ENCODE measurements at regions of chr11 and their contacts with region 1.

Region 1: DNA sequence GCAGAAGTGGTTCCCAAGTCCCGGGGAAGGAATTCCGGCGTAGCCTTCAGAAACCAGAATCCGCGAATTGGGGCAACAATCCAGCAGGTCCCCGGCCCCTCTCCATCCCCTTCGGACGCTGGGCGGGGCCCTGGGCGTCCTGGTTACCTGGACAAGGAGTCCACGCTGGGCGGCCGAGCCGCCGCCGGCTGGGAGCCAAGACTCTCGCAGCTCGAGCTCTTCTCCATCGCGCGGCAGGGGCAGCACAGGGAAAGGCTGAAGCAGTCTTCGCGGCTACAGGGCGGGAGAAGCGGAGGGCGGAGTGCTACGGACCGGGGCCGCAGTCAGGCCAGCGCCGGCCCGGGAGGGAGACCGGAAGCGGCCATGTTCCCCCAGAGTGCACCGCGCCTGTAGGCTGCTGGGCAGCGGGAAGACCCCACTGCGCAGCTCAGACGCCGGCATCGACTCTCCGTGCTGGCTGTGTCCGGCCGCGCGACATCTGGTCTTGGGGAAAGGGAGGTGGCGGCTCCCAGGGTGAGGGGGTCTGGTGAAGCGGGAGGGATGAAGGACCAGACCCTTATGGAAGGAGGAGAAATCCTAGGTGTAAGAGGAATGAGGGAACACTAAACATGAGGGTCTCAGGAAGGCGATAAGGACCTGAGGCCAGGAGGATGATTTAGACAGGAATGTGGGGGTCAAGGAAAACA is at the start of gene MTMR2:
- DNase-seq: peak; percentile 10 to 77 (median 39)
- ATAC-seq: peak; percentile 66
- H3K4me3 ChIP-seq: peak within 1 kb of the TSS; percentile 87 to 94
- H3K4me3 Mint-ChIP-seq: peak within 1 kb of the TSS; percentile 89
- H3K27ac ChIP-seq: peak within 1 kb of the TSS; percentile 62 to 88
- H3K27ac Mint-ChIP-seq: peak within 1 kb of the TSS; percentile 81
- H3K4me1 ChIP-seq: peaks cover 3% of the 10 kb centered on the region
- H3K4me1 Mint-ChIP-seq: peaks cover 35% of the 10 kb centered on the region
- H3K27me3 ChIP-seq: no peaks in the 10 kb centered on the region
- H3K27me3 Mint-ChIP-seq: peaks cover 3% of the 10 kb centered on the region
- CTCF ChIP-seq: no peak
- total RNA-seq, gene MTMR2: 11.2 to 12.9 TPM

Region 2: DNA sequence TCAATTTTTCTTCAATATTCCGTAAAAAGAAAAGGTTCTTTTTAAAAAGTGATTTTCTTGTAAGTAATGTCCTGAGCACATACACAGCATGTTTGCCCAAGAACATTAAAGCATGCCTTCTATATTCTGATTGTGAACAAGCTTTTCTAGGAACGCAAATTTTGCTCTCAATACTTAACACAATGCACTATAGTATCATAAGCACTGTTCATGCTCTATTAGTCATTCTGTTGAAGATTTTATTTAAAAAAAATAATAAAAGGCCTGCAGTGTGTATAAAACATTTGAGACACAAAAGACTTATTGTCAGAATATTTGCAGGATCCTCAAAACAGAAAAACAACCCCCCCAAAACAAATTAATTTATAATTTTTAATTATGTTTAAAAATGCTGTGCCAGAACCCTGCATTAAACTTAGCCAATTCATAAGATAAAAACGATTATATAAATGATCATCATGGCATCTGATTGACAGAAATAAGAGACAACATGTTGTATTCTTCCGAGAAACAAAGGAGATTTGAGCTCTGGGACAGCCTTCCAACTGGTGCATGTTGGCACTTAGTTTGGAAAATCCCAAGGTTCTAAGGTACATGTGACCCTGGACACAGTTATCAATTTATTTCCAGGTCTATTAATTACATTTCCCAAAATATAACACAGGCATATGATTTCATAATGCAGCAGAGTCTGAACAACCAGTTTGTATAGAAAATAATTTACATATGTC is 13.1 kb before region 1 on chr11:
- CTCF ChIA-PET with region 1: no interaction called
- POLR2A ChIA-PET with region 1: interaction called, 3 read pairs
- intact Hi-C with region 1: loop called (anchors 1 to 2 kb)
- DNase-seq: no peak
- ATAC-seq: no peak
- H3K4me3 ChIP-seq: no peak overlapping the region
- H3K4me3 Mint-ChIP-seq: no peak overlapping the region
- H3K27ac ChIP-seq: no peak overlapping the region
- H3K27ac Mint-ChIP-seq: no peak overlapping the region
- H3K4me1 ChIP-seq: no peaks in the 10 kb centered on the region
- H3K4me1 Mint-ChIP-seq: peaks cover 52% of the 10 kb centered on the region
- H3K27me3 ChIP-seq: no peaks in the 10 kb centered on the region
- H3K27me3 Mint-ChIP-seq: no peaks in the 10 kb centered on the region
- CTCF ChIP-seq: no peak

Measured in CD8-positive, alpha-beta T cell (primary cell).